ENCODE measurements at regions of chr7 and their contacts with region 1.

Region 1: DNA sequence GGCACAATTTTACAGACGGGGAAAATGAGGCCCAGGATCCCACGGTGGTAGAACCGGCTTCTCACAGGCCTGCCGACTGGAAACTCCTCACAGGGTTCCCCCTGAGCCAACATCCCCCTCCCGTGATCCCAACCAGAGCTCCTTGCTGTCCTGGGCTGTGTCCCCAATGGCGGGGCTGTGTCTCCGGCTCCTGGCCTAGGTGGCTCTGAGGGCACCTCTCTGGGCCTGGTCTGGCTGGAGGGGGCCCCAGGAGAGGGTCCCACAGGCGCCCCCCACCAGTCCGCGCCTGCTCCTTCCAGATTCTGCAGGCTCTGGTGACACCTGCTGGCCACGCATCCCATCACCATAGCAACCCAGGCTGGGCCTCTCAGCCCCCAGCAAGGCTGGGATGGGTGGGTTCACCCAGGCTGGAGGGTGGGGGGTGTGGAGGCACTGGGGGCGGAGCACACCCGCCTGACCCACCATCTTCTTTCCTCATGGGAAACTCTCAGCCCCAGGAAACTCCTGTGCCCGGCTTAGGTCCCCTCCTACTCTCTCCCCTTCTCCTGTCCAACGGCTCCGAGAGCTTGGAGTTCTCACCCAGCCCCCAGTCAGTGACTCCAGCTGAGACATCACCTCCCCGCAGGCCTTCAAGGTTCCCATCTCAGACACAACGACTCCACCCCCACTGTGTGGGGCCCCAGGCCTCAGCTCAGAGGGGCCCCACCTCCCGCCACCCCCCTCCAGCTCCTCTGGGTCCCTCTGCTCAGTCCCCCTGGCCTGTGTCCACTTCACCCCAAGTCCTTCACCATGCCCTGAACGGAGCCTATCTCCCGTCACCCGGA is 27.1 kb upstream of the TNRC18 start:
- DNase-seq: no peak
- H3K4me3 ChIP-seq: no peak overlapping the region
- H3K27ac ChIP-seq: no peak overlapping the region
- H3K4me1 ChIP-seq: peaks cover 15% of the 10 kb centered on the region
- H3K27me3 ChIP-seq: no peaks in the 10 kb centered on the region
- CTCF ChIP-seq: peak; percentile 26 to 52

Region 2: GRCh38 chr7:4996696-4997222 is 454.0 kb before region 1 on chr7:
- CTCF ChIA-PET with region 1: no interaction called
- dilution Hi-C with region 1: no loop called
- in situ Hi-C with region 1: loop called in 1 of 2 experiments (anchors 25 kb)
- intact Hi-C with region 1: no loop called
- DNase-seq: no peak
- H3K4me3 ChIP-seq: no peak overlapping the region
- H3K27ac ChIP-seq: no peak overlapping the region
- H3K4me1 ChIP-seq: peaks cover 2% of the 10 kb centered on the region
- H3K27me3 ChIP-seq: no peaks in the 10 kb centered on the region
- CTCF ChIP-seq: no peak

Region 3: DNA sequence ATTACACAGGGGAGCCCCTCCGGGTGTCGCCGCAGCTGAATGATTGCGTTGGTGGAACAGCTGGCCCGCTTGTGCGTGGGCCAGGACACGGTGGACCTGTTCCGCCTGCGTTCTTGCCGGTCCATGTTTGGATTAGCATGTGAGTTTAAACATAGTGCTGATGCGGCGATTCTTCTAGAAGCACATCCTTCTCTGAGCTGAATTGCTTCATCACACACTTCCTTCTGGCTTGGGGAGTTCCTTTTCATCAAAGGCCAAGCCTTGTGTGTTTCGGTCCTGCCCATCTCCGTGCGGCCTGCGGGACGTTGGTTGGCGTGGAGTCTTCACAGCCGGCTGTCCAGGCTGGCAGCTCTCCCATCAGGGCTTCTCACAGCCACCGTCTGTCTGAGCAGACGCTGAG is 213.5 kb before region 1 on chr7:
- CTCF ChIA-PET with region 1: no interaction called
- dilution Hi-C with region 1: no loop called
- in situ Hi-C with region 1: loop called in 1 of 2 experiments (anchors 10 kb)
- intact Hi-C with region 1: loop called (anchors 1 kb)
- DNase-seq: peak; percentile 21
- H3K4me3 ChIP-seq: no peak overlapping the region
- H3K27ac ChIP-seq: no peak overlapping the region
- H3K4me1 ChIP-seq: peaks cover 4% of the 10 kb centered on the region
- H3K27me3 ChIP-seq: no peaks in the 10 kb centered on the region
- CTCF ChIP-seq: no peak

Region 4: GRCh38 chr7:5248201-5248885 is 202.4 kb before region 1 on chr7:
- CTCF ChIA-PET with region 1: no interaction called
- dilution Hi-C with region 1: no loop called
- in situ Hi-C with region 1: loop called in 1 of 2 experiments (anchors 10 kb)
- intact Hi-C with region 1: no loop called
- DNase-seq: no peak
- H3K4me3 ChIP-seq: no peak overlapping the region
- H3K27ac ChIP-seq: no peak overlapping the region
- H3K4me1 ChIP-seq: no peaks in the 10 kb centered on the region
- H3K27me3 ChIP-seq: no peaks in the 10 kb centered on the region
- CTCF ChIP-seq: no peak

Region 5: GRCh38 chr7:5363729-5364128 is 87.0 kb before region 1 on chr7:
- CTCF ChIA-PET with region 1: no interaction called
- dilution Hi-C with region 1: no loop called
- in situ Hi-C with region 1: no loop called
- intact Hi-C with region 1: loop called (anchors 1 kb)
- DNase-seq: no peak
- H3K4me3 ChIP-seq: no peak overlapping the region
- H3K27ac ChIP-seq: no peak overlapping the region
- H3K4me1 ChIP-seq: no peaks in the 10 kb centered on the region
- H3K27me3 ChIP-seq: no peaks in the 10 kb centered on the region
- CTCF ChIP-seq: no peak

Region 6: DNA sequence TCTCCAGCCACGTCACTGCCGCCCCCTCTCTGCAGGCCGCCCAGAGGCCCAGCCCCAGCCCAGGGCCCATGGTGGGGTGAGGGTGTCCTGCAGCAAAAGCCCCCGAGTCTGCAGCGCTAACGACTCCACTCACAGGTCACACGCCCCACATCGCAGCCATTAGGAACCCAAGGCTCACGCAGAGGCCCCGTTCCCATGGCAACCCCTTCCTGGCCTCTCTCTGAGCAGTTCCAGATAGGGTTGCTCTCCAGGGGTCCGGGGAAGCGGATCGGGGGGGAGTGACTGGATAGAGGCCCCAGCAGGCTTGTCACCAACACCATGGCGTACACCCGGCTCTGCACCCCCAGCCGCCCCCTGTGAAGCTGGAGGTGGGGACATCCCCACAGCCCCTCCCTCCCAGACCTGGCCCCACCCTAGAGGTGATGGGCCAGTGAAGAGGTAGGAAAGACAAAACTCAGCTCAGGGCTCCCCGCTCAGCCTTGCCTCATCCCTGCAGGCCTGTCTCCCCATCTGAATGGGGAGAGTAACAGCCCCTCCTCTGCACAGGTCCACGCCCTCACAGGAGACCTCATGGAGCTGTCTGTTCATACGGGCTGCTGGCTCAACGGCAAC is 68.4 kb before region 1 on chr7:
- CTCF ChIA-PET with region 1: no interaction called
- dilution Hi-C with region 1: no loop called
- in situ Hi-C with region 1: no loop called
- intact Hi-C with region 1: no loop called
- DNase-seq: no peak
- H3K4me3 ChIP-seq: no peak overlapping the region
- H3K27ac ChIP-seq: no peak overlapping the region
- H3K4me1 ChIP-seq: no peaks in the 10 kb centered on the region
- H3K27me3 ChIP-seq: no peaks in the 10 kb centered on the region
- CTCF ChIP-seq: no peak

Region 7: DNA sequence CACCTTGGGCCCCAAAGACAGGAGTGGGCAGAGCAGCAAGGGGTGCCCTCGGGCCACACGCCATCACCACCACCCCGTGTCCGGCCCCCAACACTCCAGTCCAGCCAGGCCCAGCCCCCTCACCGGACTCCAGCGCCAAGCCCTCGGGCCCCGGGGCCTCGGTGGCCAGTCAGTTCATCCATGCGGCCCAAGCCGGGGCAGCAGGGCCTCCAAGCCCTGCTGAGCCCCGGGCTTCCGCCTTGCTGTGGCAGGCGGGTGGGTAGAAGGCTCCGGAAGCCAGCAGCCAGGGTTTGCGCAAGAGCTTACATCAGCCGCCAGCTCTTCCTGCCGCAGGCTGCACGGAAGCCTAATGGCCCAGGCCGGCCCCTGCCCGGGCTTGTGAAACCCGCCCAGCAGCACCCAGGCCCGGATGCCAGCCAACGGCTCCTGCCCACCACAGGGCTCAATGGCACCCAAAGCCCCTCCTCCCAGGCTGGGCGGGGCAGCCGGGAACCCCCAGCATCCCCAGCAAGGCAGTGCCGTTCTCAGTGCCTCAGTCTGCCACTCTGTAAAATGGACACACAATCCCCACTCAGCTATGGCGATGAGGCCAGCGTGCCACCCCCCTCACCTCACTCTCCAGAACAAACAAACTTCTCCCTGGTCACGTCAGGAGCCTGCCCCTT is 53.6 kb before region 1 on chr7:
- CTCF ChIA-PET with region 1: interaction called, 10 read pairs
- dilution Hi-C with region 1: no loop called
- in situ Hi-C with region 1: no loop called
- intact Hi-C with region 1: loop called (anchors 1 kb)
- DNase-seq: peak; percentile 96
- H3K4me3 ChIP-seq: peak overlapping the region; percentile 62 to 84 (median 82)
- H3K27ac ChIP-seq: peak overlapping the region; percentile 78
- H3K4me1 ChIP-seq: peaks cover 9% of the 10 kb centered on the region
- H3K27me3 ChIP-seq: no peaks in the 10 kb centered on the region
- CTCF ChIP-seq: no peak

Region 8: GRCh38 chr7:5417106-5418071 is 33.4 kb before region 1 on chr7:
- CTCF ChIA-PET with region 1: no interaction called
- dilution Hi-C with region 1: no loop called
- in situ Hi-C with region 1: no loop called
- intact Hi-C with region 1: no loop called
- DNase-seq: no peak
- H3K4me3 ChIP-seq: no peak overlapping the region
- H3K27ac ChIP-seq: no peak overlapping the region
- H3K4me1 ChIP-seq: peaks cover 20% of the 10 kb centered on the region
- H3K27me3 ChIP-seq: no peaks in the 10 kb centered on the region
- CTCF ChIP-seq: no peak

Measured in mammary epithelial cell (primary cell).